GM10248 (cell line): ENCODE measurements at regions of chr19 and their contacts with region 1.

Region 1: GRCh38 chr19:56333505-56333904 is 18.9 kb upstream of the ZSCAN5A start:
- DNase-seq: peak; percentile 50
- CTCF ChIP-seq: peak; percentile 81

Region 2: DNA sequence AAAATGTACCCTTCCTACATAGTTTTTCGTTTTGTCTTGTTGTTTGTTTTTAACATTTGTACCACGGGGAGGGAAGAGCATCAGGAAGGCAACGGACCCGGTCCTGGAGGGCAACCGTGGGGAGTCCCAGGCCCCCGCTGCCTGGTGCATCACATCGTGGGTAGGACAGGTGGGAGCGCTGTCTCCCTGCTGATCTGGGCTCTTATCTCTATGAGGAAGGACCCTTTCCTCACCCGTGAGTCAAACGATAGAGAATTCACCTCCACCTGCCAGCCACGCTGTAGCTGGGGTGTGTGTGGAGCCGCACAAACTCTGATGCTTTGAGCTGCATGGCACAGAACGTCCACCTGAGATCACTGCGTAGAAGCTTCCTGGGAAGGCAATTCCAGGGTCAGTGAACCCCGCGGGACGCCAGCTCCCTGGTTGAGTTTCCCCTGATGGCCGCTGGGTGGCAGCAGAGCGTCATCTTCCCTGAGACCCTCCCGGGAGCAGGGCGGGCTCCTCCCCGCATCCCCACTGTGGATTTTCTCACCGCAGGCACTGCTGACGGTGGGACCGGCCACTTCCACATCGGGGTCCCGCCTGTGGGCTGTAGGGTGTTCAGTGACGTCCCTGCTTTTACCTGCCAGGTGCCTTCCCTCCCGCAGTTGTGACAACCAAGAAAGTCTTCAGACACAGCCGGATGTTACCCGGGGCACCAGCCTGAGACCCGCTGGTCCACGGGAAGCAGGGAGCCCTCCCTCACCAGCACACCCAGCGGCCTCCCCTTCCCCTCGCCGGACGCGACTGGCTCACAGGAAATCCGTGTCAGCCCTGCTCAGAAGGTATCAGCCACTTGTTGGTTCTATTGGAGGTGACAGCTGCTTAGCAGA is 267.1 kb before region 1 on chr19:
- CTCF ChIA-PET with region 1: interaction called, 61 read pairs
- POLR2A ChIA-PET with region 1: no interaction called
- DNase-seq: peak; percentile 84
- CTCF ChIP-seq: peak; percentile 93

Region 3: DNA sequence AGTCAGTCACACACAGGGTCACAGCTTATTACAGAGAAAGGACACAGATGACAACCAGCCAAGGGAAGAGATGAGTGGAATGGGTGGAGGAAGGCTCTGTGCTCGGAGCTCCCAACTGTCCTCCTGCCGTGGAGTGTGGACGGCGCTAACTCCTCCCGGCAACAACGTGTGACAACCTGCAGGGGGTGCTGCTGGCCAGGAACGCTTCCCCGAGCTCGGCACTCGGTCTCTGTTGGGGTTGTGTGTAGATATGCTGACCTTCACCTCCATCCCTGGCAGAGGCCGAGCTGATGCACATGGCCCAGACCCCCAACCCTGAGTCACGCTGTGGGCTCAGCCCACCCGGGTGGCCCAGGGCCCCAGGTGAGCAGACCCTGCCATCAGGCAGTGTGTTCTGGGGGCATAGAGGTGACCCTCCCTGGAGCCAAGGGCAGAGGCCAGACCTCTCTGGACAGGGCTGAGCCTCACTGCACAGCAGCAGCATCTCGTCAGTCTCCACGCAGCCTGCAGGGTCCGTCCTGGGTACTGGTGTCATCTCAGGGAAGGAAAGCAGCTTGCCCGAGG is 178.3 kb before region 1 on chr19:
- CTCF ChIA-PET with region 1: interaction called, 10 read pairs
- POLR2A ChIA-PET with region 1: no interaction called
- DNase-seq: no peak
- CTCF ChIP-seq: peak; percentile 29

Region 4: GRCh38 chr19:56261145-56261544 is 72.4 kb before region 1 on chr19:
- CTCF ChIA-PET with region 1: interaction called, 133 read pairs
- POLR2A ChIA-PET with region 1: no interaction called
- DNase-seq: no peak
- CTCF ChIP-seq: no peak

Region 5: GRCh38 chr19:56314562-56315077 is 18.9 kb before region 1 on chr19 and contains the start of gene ZSCAN5A:
- CTCF ChIA-PET with region 1: interaction called, 16 read pairs
- POLR2A ChIA-PET with region 1: no interaction called
- DNase-seq: peak; percentile 95
- CTCF ChIP-seq: no peak

Region 6: DNA sequence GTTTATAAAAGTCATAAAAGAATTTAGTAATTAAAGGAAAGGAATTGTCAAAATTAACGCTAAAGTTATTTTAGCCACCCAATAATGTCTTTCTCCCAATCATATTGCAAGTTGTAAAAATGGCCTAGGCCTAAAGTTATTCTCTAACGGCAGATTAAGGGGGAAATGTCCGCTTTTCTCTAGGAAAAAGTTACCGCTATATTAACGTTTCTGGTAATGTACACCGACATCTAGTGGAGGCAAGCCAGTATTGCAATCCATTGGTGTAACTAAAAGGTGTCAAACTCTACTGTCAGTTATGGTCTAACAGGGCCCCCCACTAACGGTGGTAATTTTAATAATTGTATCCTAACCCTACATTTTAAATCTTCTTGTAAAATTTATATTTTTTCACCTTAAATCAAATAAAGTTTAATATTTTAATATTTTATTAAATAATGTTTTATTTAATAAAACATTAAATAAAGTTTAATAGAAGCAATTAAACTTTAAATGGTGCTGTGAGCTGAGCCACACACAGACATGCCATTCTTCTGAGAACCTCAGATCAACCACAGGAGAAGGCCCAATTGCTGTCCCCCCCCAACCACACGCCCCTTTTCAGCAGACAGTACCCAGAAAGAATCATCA is 17.0 kb after region 1 on chr19:
- CTCF ChIA-PET with region 1: interaction called, 30 read pairs
- POLR2A ChIA-PET with region 1: no interaction called
- DNase-seq: peak; percentile 37
- CTCF ChIP-seq: peak; percentile 82